ENCODE measurements at regions of chr11 and their contacts with region 1.

Region 1: DNA sequence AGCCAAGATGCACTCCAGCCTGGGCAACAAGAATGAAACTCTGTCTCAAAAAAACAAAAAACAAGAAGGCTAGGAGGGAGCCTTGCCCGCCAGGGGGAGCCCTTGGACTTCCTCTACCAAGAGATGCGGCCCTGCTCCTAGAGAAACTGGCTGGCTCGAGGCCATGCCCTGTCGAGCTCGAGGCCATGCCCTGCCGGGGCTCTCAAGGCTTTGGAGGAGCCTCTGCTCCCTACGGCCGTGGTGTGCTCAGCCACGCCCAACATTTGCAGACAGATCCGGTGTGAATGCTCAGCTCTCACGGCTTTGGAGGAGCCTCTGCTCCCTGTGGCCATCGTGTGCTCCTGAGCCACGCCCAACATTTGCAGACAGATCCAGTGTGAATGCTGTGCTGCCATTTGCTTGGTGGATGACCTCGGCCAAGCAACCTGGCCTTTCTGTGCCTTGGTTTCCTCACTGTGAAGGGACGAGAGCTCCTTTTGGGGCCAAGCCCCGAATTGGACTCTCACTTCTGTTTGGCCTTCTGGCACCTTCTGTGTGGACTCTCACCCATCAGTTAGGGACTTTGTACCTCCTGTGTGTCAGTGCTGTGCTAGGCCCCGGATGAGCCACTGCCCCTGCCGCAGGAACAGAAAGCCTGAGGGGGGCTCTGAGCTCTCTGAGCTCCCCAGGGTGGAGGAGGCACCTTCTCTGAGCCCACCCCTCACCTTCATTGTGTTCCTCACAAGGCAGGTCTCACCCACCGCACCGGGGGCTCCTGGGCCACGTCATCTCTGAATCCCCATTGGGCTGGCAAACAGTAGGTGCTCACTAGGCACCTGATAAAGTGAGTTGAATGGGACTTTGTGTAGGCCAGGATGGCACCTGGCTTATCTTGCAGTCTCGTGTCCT is 14.1 kb downstream of the C11orf24 start:
- DNase-seq: peak; percentile 46
- H3K4me3 ChIP-seq: peak overlapping the region in 2 of 4 donors; percentile 18 to 49
- H3K27ac ChIP-seq: peak overlapping the region in 1 of 4 donors; percentile 29
- H3K4me1 ChIP-seq: peaks cover 0 to 18% (median 4%) of the 10 kb centered on the region in 3 donors
- H3K27me3 ChIP-seq: no peaks in the 10 kb centered on the region
- CTCF ChIP-seq: peak; percentile 82 to 96 (median 92)
- POLR2A ChIP-seq: no peak

Region 2: GRCh38 chr11:68297812-68298658 is 40.3 kb after region 1 on chr11:
- intact Hi-C with region 1: loop called (anchors 2 kb)
- DNase-seq: peak; percentile 22
- H3K4me3 ChIP-seq: peak overlapping the region in 1 of 4 donors; percentile 17
- H3K27ac ChIP-seq: no peak overlapping the region
- H3K4me1 ChIP-seq: peaks cover 5 to 14% (median 12%) of the 10 kb centered on the region in 3 donors
- H3K27me3 ChIP-seq: peaks cover 0 to 10% (median 0%) of the 10 kb centered on the region in 4 donors
- CTCF ChIP-seq: peak; percentile 95 to 99 (median 98)
- POLR2A ChIP-seq: no peak

Region 3: GRCh38 chr11:68383976-68384501 is 126.3 kb after region 1 on chr11:
- intact Hi-C with region 1: loop called (anchors 2 kb)
- DNase-seq: no peak
- H3K4me3 ChIP-seq: no peak overlapping the region
- H3K27ac ChIP-seq: peak overlapping the region in 3 of 4 donors; percentile 59 to 83 (median 73)
- H3K4me1 ChIP-seq: peaks cover 18 to 51% (median 36%) of the 10 kb centered on the region in 3 donors
- H3K27me3 ChIP-seq: no peaks in the 10 kb centered on the region
- CTCF ChIP-seq: peak; percentile 82 to 92 (median 88)
- POLR2A ChIP-seq: no peak

Region 4: DNA sequence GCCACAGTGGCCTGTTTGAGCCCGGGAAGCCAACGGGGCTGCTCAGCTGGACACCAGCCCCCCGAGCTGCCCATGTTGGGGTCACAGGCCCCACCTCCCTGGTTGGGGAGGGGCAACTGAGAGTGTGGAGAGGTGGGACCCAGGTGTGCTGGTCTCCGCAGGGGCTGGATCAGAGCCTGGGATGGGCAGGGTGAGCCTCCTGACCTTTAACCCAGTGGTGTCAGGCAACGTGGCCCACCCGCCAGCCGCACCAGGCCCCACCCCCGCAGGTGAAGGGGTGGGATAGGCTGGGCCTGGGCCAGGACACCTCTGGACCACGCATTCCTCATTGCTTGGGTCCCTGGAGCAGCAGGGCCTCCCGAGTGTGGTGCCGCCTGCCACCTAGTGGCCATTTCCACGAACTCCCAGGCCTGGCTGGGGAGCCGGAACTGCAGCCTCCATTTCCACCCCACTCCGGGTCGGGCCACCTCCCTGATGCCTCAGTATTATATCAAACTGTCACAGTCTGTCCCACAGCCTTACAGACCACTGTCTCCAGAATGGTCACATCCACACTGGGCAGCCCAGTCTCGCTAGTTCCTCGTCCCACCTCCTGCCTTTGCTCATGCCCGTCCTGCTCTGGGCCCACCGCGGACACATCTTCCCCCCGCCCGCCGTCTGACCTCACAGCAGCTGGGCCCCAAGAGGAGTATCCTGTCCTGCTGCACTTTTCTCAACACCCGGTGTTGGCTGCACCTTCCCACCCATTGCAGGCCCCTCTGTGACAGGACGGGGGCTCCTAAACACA is 189.5 kb after region 1 on chr11:
- intact Hi-C with region 1: loop called (anchors 5 kb)
- DNase-seq: no peak
- H3K4me3 ChIP-seq: no peak overlapping the region
- H3K27ac ChIP-seq: no peak overlapping the region
- H3K4me1 ChIP-seq: peaks cover 0 to 8% (median 0%) of the 10 kb centered on the region in 3 donors
- H3K27me3 ChIP-seq: no peaks in the 10 kb centered on the region
- CTCF ChIP-seq: peak; percentile 86 to 93 (median 89)
- POLR2A ChIP-seq: no peak